Endothelial cell of umbilical vein (primary cell): ENCODE measurements at regions of chr1 and their contacts with region 1.

Region 1: DNA sequence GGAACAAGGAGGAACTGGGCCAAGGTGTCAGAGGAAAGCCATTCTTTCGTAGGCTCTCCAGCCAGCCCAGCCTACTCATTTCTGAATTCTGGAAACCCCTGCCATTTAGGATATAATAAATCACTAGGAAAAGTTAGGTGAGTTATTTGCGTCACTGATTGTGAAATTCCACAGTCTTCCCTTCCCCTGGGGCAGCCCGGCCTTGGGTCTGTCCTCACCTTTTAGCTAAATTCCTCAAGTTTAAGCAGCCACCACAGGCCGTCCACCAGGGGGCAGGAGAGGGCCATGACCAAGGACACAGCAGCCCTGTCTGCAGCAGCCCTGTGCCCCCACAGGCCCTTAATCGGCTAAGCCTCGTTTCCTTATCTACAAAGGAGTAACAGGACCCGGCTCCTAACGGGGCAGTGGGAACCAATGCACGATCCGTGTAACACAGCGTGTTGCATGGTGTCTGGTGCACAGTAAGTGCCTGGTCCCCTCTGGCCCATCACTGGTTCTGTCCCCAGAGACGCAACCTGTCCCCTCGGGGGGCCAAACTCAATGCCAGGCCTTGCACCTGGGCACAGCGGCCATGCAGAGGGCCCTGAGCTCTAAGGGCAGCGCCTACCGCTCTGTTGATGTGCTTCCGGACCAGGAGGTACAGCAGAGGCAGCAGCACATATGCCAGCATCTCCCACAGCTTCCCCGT is 18.1 kb downstream of the GPR157 start:
- DNase-seq: peak; percentile 85
- H3K4me3 ChIP-seq: no peak overlapping the region
- H3K27ac ChIP-seq: no peak overlapping the region
- H3K4me1 ChIP-seq: no peaks in the 10 kb centered on the region
- H3K27me3 ChIP-seq: no peaks in the 10 kb centered on the region
- CTCF ChIP-seq: peak; percentile 93
- POLR2A ChIP-seq: no peak

Region 2: GRCh38 chr1:9086796-9087195 is 24.0 kb before region 1 on chr1:
- CTCF ChIA-PET with region 1: no interaction called
- POLR2A ChIA-PET with region 1: no interaction called
- dilution Hi-C with region 1: no loop called
- intact Hi-C with region 1: no loop called
- DNase-seq: no peak
- H3K4me3 ChIP-seq: no peak overlapping the region
- H3K27ac ChIP-seq: no peak overlapping the region
- H3K4me1 ChIP-seq: no peaks in the 10 kb centered on the region
- H3K27me3 ChIP-seq: peaks cover 6 to 19% of the 10 kb centered on the region in 2 experiments
- CTCF ChIP-seq: no peak
- POLR2A ChIP-seq: no peak

Region 3: GRCh38 chr1:9128520-9129265 is 17.9 kb after region 1 on chr1 and contains the start of gene GPR157:
- CTCF ChIA-PET with region 1: interaction called, 48 read pairs
- POLR2A ChIA-PET with region 1: no interaction called
- dilution Hi-C with region 1: no loop called
- intact Hi-C with region 1: no loop called
- DNase-seq: peak; percentile 70
- H3K4me3 ChIP-seq: peak within 1 kb of the TSS; percentile 34 to 49 (median 36)
- H3K27ac ChIP-seq: no peak within 1 kb of the TSS
- H3K4me1 ChIP-seq: peaks cover 8% of the 10 kb centered on the region
- H3K27me3 ChIP-seq: no peaks in the 10 kb centered on the region
- CTCF ChIP-seq: peak in 1 of 2 donors; percentile 19
- POLR2A ChIP-seq: peak; percentile 78
- total RNA-seq, gene GPR157: 5.2 and 6.5 TPM in 2 replicates

Region 4: GRCh38 chr1:9181176-9181906 is 70.5 kb after region 1 on chr1:
- CTCF ChIA-PET with region 1: interaction called, 17 read pairs
- POLR2A ChIA-PET with region 1: no interaction called
- dilution Hi-C with region 1: no loop called
- intact Hi-C with region 1: no loop called
- DNase-seq: peak; percentile 74
- H3K4me3 ChIP-seq: peak overlapping the region; percentile 66 to 79 (median 76)
- H3K27ac ChIP-seq: peak overlapping the region; percentile 69
- H3K4me1 ChIP-seq: peaks cover 22% of the 10 kb centered on the region
- H3K27me3 ChIP-seq: no peaks in the 10 kb centered on the region
- CTCF ChIP-seq: peak; percentile 98 to 99
- POLR2A ChIP-seq: no peak

Region 5: DNA sequence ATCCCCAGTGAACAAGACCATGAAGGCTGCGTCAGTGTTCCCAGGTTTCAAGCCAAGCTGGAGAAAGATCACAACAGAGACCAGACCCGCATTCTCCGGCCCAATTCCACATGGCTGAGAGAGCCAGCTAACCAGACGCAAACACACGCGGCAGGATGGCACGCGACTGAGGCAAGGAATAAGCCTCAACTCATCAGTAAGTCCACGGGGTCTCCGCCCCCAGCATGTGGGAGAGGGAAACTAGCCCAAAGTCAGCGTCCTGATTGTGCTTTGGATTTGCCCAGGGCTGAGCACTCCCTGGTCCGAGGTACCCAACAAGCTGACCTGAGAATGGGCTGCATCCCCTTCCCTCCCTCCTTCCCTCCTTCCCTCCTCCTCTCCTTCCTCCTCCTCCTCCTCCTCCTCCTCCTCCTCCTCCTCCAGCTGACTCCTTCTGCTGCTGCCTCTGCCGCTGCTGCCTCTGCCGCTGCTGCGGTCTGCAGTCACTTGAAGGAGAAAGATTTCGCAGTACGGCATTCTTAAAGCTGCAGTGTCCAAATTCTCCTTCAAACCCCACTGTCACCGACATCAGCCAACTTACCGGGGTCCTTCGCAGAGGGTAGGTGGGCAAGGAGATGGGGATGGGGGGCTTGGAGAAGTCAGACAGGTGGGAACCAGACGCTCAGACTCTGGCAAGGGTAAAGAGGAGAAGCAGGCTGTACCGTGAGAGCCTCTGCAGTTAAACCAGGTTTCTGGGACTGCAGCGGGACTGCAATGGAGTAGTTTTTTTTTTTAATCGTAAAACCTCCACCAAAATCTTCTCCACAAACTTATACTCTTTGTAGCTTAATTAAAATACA is 90.8 kb after region 1 on chr1:
- CTCF ChIA-PET with region 1: interaction called, 84 read pairs
- POLR2A ChIA-PET with region 1: no interaction called
- dilution Hi-C with region 1: no loop called
- intact Hi-C with region 1: loop called (anchors 1 kb)
- DNase-seq: peak; percentile 48
- H3K4me3 ChIP-seq: peak overlapping the region; percentile 32 to 60 (median 54)
- H3K27ac ChIP-seq: no peak overlapping the region
- H3K4me1 ChIP-seq: peaks cover 16% of the 10 kb centered on the region
- H3K27me3 ChIP-seq: peaks cover 21 to 23% of the 10 kb centered on the region in 2 experiments
- CTCF ChIP-seq: no peak
- POLR2A ChIP-seq: no peak

Region 6: GRCh38 chr1:9249534-9250410 is 139.0 kb after region 1 on chr1:
- CTCF ChIA-PET with region 1: interaction called, 44 read pairs
- POLR2A ChIA-PET with region 1: no interaction called
- dilution Hi-C with region 1: no loop called
- intact Hi-C with region 1: loop called (anchors 1 kb)
- DNase-seq: peak; percentile 41
- H3K4me3 ChIP-seq: no peak overlapping the region
- H3K27ac ChIP-seq: no peak overlapping the region
- H3K4me1 ChIP-seq: no peaks in the 10 kb centered on the region
- H3K27me3 ChIP-seq: no peaks in the 10 kb centered on the region
- CTCF ChIP-seq: peak; percentile 61 to 77
- POLR2A ChIP-seq: no peak

Region 7: DNA sequence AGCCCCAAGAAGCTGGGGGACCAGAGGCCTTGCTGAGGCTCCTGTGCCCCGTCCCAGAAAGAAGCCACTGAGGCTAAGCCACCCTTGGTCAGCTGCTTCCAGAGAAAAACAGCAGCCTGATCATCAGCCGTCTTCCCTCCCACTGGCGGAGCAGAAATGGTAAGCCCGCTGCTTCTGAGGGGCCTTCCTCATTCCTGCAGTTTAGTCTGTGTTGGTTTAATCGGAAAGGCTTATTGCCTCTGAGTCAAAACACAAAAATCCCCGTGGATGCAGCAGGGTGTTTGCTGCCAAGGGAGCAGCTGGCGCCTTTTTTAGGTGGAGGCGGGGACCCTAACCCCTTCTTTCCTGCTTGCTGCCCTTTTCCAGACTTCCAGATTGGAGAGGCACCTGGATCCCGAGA is 215.8 kb after region 1 on chr1:
- CTCF ChIA-PET with region 1: no interaction called
- POLR2A ChIA-PET with region 1: no interaction called
- dilution Hi-C with region 1: no loop called
- intact Hi-C with region 1: no loop called
- DNase-seq: no peak
- H3K4me3 ChIP-seq: no peak overlapping the region
- H3K27ac ChIP-seq: no peak overlapping the region
- H3K4me1 ChIP-seq: no peaks in the 10 kb centered on the region
- H3K27me3 ChIP-seq: no peaks in the 10 kb centered on the region
- CTCF ChIP-seq: no peak
- POLR2A ChIP-seq: no peak

Region 8: GRCh38 chr1:9340172-9340854 is 229.5 kb after region 1 on chr1:
- CTCF ChIA-PET with region 1: no interaction called
- POLR2A ChIA-PET with region 1: no interaction called
- dilution Hi-C with region 1: no loop called
- intact Hi-C with region 1: no loop called
- DNase-seq: peak; percentile 29
- H3K4me3 ChIP-seq: no peak overlapping the region
- H3K27ac ChIP-seq: no peak overlapping the region
- H3K4me1 ChIP-seq: peaks cover 23% of the 10 kb centered on the region
- H3K27me3 ChIP-seq: no peaks in the 10 kb centered on the region
- CTCF ChIP-seq: no peak
- POLR2A ChIP-seq: no peak

Region 9: GRCh38 chr1:9455487-9456234 is 344.8 kb after region 1 on chr1:
- CTCF ChIA-PET with region 1: interaction called, 11 read pairs
- POLR2A ChIA-PET with region 1: no interaction called
- dilution Hi-C with region 1: no loop called
- intact Hi-C with region 1: no loop called
- DNase-seq: peak; percentile 79
- H3K4me3 ChIP-seq: no peak overlapping the region
- H3K27ac ChIP-seq: no peak overlapping the region
- H3K4me1 ChIP-seq: no peaks in the 10 kb centered on the region
- H3K27me3 ChIP-seq: peaks cover 0 to 4% of the 10 kb centered on the region in 2 experiments
- CTCF ChIP-seq: peak; percentile 85 to 91
- POLR2A ChIP-seq: no peak